ENCODE measurements at regions of chr3 and their contacts with region 1.

Region 1: GRCh38 chr3:73100741-73101559 is 39.5 kb downstream of the EBLN2 start:
- DNase-seq: peak; percentile 78
- H3K4me3 ChIP-seq: no peak overlapping the region
- H3K27ac ChIP-seq: no peak overlapping the region
- H3K4me1 ChIP-seq: no peaks in the 10 kb centered on the region
- CTCF ChIP-seq: peak; percentile 94

Region 2: GRCh38 chr3:73432023-73432705 is 331.2 kb after region 1 on chr3:
- CTCF ChIA-PET with region 1: no interaction called
- POLR2A ChIA-PET with region 1: no interaction called
- intact Hi-C with region 1: loop called (anchors 2 kb)
- DNase-seq: peak; percentile 52
- H3K4me3 ChIP-seq: no peak overlapping the region
- H3K27ac ChIP-seq: no peak overlapping the region
- H3K4me1 ChIP-seq: no peaks in the 10 kb centered on the region
- CTCF ChIP-seq: peak; percentile 90

Region 3: DNA sequence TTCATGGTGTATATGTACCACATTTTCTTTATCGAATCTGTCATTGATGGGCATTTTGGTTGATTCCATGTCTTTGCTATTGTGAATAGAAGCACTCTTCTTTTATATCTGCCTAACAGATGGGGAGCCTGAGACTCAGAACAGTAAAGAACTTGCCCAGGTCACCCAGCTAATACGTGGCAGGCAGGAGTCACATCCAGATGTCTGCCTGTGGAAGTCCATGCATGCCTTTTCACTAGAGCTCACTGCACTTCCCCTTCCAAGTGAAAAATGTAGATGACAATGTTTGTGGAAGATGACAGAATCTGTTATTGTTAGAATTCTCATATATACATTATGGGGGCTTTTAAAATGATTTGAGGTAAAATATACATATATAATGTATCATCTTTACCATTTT is 358.8 kb after region 1 on chr3:
- CTCF ChIA-PET with region 1: no interaction called
- POLR2A ChIA-PET with region 1: interaction called, 5 read pairs
- intact Hi-C with region 1: loop called (anchors 5 kb)
- DNase-seq: no peak
- H3K4me3 ChIP-seq: no peak overlapping the region
- H3K27ac ChIP-seq: no peak overlapping the region
- H3K4me1 ChIP-seq: no peaks in the 10 kb centered on the region
- CTCF ChIP-seq: no peak